PC-9 (cell line): ENCODE measurements at regions of chr2 and their contacts with region 1.

Region 1: DNA sequence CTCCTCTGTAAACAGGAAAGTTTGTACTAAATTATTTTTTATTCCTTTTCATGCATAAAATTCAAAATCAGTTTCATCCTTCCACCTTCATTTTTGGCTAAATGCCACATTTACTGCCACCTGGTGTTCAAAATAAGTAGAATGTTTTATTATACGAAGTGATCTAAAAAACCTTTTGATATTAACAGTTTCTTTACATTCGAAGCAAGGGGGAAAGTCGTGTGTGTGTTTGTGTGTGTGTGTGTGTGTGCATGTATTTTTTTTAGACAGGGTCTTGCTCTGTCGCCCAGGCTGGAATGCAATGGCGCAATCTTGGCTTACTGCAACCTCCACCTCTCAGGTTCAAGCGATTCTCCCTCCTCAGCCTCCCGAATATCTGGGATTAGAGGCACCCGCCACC is 9.0 kb upstream of the SCN9A start:
- DNase-seq: no peak
- H3K4me3 ChIP-seq: no peak overlapping the region
- H3K27ac ChIP-seq: no peak overlapping the region
- H3K4me1 ChIP-seq: no peaks in the 10 kb centered on the region
- H3K27me3 ChIP-seq: no peaks in the 10 kb centered on the region
- CTCF ChIP-seq: peak; percentile 54

Region 2: GRCh38 chr2:166067229-166067628 is 317.5 kb before region 1 on chr2:
- CTCF ChIA-PET with region 1: no interaction called
- POLR2A ChIA-PET with region 1: no interaction called
- intact Hi-C with region 1: no loop called
- DNase-seq: no peak
- H3K4me3 ChIP-seq: no peak overlapping the region
- H3K27ac ChIP-seq: no peak overlapping the region
- H3K4me1 ChIP-seq: no peaks in the 10 kb centered on the region
- H3K27me3 ChIP-seq: no peaks in the 10 kb centered on the region
- CTCF ChIP-seq: no peak

Region 3: GRCh38 chr2:166361351-166362153 is 23.2 kb before region 1 on chr2:
- CTCF ChIA-PET with region 1: no interaction called
- POLR2A ChIA-PET with region 1: no interaction called
- intact Hi-C with region 1: loop called (anchors 1 kb)
- DNase-seq: no peak
- H3K4me3 ChIP-seq: no peak overlapping the region
- H3K27ac ChIP-seq: no peak overlapping the region
- H3K4me1 ChIP-seq: no peaks in the 10 kb centered on the region
- H3K27me3 ChIP-seq: no peaks in the 10 kb centered on the region
- CTCF ChIP-seq: peak; percentile 53